A549 (cell line): ENCODE measurements at regions of chr21 and their contacts with region 1.

Region 1: GRCh38 chr21:45140346-45140940 is 66.1 kb downstream of the ADARB1 start:
- DNase-seq: peak; percentile 79 to 89
- ATAC-seq: peak; percentile 97
- H3K4me3 ChIP-seq: no peak overlapping the region
- H3K27ac ChIP-seq: no peak overlapping the region
- H3K4me1 ChIP-seq: peaks cover 12% of the 10 kb centered on the region; the same call in 2 of the 3 replicates
- CTCF ChIP-seq: peak; percentile 66
- EP300 ChIP-seq: no peak
- POLR2A ChIP-seq: no peak
- RAD21 ChIP-seq: peak; percentile 83 to 86

Region 2: DNA sequence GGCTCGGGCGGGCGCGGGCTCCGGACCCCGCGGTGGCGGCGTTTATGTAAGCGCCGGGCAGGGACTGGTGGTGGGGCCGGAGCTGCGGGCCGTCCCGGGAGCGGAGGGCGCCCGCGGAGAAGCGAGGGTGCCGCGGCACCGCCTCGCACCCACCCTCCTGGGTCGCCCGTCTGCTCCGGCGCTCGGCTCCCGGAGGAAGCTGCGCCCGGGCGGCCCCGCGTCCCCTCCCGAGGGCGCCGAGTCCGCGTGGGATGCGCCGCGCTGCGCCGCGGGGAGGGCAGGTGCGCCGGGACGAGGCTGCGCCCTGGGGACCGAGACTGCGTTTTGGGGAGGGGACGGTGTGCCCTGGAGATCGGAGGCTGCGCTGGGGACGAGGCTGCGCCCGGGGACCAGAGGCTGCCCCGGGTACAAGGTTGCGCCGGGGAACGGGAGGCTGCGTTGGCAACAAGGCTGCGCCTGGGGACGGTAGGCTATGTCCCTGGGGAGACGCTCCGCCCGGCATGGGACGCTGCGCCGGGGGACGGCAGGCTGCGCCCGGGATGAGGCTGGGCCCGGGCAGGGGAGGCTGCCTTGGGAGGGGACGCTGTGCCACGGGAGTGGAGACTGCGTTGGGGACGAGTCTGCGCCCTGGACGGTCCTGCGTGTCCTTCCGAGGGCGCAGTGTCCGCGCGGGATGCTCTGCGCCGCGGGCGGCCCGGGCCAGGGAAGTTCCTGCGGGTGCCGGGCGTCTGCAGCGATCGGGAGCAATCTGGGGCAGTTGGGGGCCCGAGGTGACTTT is 65.4 kb before region 1 on chr21:
- CTCF ChIA-PET with region 1: interaction called, 17 read pairs
- POLR2A ChIA-PET with region 1: no interaction called
- DNase-seq: peak in 1 of 2 experiments; percentile 39
- ATAC-seq: peak; percentile 22 to 54
- H3K4me3 ChIP-seq: peak overlapping the region; percentile 98
- H3K27ac ChIP-seq: peak overlapping the region; percentile 89 to 99
- H3K4me1 ChIP-seq: 0 out of 3 replicates have a peak, but pooled peaks cover 3% of the 10 kb centered on the region
- CTCF ChIP-seq: no peak
- EP300 ChIP-seq: no peak
- POLR2A ChIP-seq: no peak
- RAD21 ChIP-seq: no peak

Region 3: GRCh38 chr21:45120975-45121374 is 19.5 kb before region 1 on chr21:
- CTCF ChIA-PET with region 1: interaction called, 99 read pairs
- POLR2A ChIA-PET with region 1: no interaction called
- DNase-seq: no peak
- ATAC-seq: no peak
- H3K4me3 ChIP-seq: no peak overlapping the region
- H3K27ac ChIP-seq: no peak overlapping the region
- H3K4me1 ChIP-seq: no peaks in the 10 kb centered on the region
- CTCF ChIP-seq: no peak
- EP300 ChIP-seq: no peak
- POLR2A ChIP-seq: no peak
- RAD21 ChIP-seq: no peak

Region 4: GRCh38 chr21:45180246-45180599 is 39.8 kb after region 1 on chr21:
- CTCF ChIA-PET with region 1: no interaction called
- POLR2A ChIA-PET with region 1: no interaction called
- DNase-seq: no peak
- ATAC-seq: no peak
- H3K4me3 ChIP-seq: no peak overlapping the region
- H3K27ac ChIP-seq: no peak overlapping the region
- H3K4me1 ChIP-seq: no peaks in the 10 kb centered on the region
- CTCF ChIP-seq: no peak
- EP300 ChIP-seq: no peak
- POLR2A ChIP-seq: no peak
- RAD21 ChIP-seq: no peak

Region 5: DNA sequence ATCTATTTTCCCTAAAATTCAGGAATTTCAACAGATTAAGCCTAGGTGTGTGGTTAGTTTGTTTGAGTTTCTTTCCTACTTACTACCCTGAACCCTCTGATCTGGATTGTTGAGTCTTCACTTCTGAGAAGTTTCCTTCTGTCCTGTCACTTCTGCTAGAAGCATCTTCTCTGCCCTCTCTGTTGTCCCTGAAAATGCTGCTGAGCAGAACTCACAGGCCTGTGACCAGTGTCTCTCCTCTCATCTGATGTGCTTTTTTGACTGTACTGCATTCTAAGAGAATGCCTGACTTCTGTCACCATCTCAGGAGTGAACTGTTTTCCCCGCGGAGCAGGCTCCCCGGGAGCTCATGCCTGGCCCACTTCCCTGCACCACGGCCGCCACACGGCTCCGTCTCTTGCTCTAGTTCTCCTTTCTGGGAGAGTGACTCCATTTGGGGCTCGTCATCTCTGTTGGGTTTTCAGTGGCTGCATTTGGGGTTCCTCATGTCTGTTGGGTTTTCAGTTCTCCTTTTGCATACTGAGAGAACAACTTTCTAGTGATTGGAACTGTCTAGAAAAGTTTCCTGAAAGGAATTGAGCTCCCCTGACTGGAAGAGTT is 69.3 kb after region 1 on chr21:
- CTCF ChIA-PET with region 1: interaction called, 11 read pairs
- POLR2A ChIA-PET with region 1: no interaction called
- DNase-seq: no peak
- ATAC-seq: no peak
- H3K4me3 ChIP-seq: no peak overlapping the region
- H3K27ac ChIP-seq: no peak overlapping the region
- H3K4me1 ChIP-seq: no peaks in the 10 kb centered on the region
- CTCF ChIP-seq: no peak
- EP300 ChIP-seq: no peak
- POLR2A ChIP-seq: no peak
- RAD21 ChIP-seq: no peak

Region 6: DNA sequence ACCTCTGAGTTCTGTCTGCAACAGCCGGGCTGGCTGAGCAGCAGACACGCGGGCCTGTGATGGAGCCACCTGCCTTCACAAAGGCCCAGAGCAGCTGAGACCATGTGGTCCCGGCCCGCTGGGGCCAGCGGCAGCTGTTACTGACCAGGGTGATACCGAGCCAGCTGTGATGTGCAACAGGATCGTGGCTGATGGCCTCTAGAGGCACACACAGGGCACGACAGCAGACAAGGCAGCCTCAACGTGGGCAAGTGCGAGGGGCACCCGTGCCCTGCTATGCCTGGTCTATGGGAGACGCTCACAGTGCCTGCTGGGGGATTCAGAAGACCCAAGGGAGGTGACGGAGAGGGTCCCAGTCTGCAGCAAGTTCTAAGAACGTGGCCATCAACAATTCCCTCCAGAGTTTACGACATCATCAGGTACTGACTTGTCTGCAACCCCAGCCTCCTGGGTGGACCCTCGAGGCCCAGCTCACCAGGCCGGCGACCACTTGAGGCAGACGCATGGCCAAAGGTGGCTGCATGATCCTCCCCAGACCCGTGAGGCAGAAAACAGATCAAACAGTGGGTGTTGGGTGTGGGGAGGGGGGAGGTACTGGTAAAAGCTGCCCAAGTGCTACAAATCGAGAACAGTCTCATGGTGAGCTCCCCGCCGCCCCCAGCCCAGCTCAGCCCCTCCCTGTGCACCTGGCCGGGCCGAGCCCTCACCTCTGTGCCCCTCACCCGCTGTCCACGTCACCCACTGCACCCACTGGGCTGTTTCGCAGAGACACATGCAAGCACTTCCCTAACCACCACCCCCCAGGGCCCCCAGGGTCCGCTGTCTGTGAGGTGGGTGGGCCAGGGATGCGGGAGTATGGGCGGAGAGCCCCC is 141.2 kb after region 1 on chr21:
- CTCF ChIA-PET with region 1: interaction called, 12 read pairs
- POLR2A ChIA-PET with region 1: no interaction called
- DNase-seq: no peak
- ATAC-seq: no peak
- H3K4me3 ChIP-seq: no peak overlapping the region
- H3K27ac ChIP-seq: no peak overlapping the region
- H3K4me1 ChIP-seq: peaks cover 3% of the 10 kb centered on the region; the same call in 1 of the 3 replicates
- CTCF ChIP-seq: no peak
- EP300 ChIP-seq: no peak
- POLR2A ChIP-seq: no peak
- RAD21 ChIP-seq: no peak

Region 7: DNA sequence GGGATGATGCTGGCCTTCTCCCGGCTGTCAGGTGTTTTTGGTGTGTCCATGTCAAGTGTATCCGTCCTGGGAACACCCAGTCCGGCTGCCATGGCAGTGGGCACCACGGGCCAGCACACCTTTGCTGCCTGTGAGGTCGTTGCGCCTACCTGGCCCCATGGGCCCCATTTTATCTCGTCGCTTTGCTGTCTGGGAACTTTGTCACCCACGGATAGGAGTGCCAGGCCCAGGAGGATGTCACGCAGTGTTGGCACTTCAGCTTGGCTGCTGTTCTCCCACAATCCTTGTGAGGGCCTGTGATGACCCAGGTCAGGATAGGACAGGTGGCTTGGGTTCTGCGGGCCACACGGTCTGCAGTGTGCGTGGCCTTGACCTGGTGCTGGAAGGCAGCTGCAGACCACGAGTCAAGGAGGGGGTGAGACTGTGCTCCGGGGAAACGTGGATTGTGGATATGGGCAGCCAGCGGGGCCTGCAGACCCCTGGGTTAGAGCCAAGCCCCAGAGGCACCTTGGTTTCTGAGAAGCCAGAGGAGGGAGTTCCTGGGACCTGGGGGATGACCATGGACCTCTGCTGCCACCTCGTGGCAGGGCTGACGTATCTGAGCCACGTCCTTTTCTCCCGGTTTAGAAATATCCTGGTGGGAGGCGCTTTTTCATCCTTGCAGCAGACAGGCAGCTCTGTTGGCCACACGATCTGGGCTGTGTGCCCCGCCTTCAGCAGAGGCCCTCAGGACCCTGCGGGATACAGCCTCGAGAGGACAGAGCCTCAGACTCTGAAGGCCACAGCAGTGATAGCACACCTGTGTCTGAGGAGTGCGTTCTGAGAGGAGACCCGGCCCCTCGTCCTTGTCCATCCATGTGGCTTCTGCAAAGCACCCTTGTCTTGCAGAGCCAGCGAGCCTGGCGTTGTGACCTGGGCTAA is 680.0 kb after region 1 on chr21:
- CTCF ChIA-PET with region 1: interaction called, 29 read pairs
- POLR2A ChIA-PET with region 1: no interaction called
- DNase-seq: peak; percentile 78 to 82
- ATAC-seq: peak; percentile 82 to 93
- H3K4me3 ChIP-seq: no peak overlapping the region
- H3K27ac ChIP-seq: peak overlapping the region in 1 of 2 experiments; percentile 70; a peak in 3 of 6 replicates
- H3K4me1 ChIP-seq: peaks cover 28% of the 10 kb centered on the region
- CTCF ChIP-seq: peak; percentile 69
- EP300 ChIP-seq: no peak
- POLR2A ChIP-seq: no peak
- RAD21 ChIP-seq: peak; percentile 87 to 90